ENCODE measurements at regions of chr2 and their contacts with region 1.

Region 1: GRCh38 chr2:60998628-60999545 is 18.6 kb upstream of the PEX13 start:
- DNase-seq: peak; percentile 13
- H3K4me3 ChIP-seq: no peak overlapping the region
- H3K27ac ChIP-seq: no peak overlapping the region
- H3K27me3 ChIP-seq: no peaks in the 10 kb centered on the region
- CTCF ChIP-seq: peak; percentile 67

Region 2: GRCh38 chr2:59440491-59440890 is 1558.4 kb before region 1 on chr2:
- CTCF ChIA-PET with region 1: no interaction called
- POLR2A ChIA-PET with region 1: no interaction called
- DNase-seq: no peak
- H3K4me3 ChIP-seq: no peak overlapping the region
- H3K27ac ChIP-seq: no peak overlapping the region
- H3K27me3 ChIP-seq: no peaks in the 10 kb centered on the region
- CTCF ChIP-seq: no peak

Region 3: DNA sequence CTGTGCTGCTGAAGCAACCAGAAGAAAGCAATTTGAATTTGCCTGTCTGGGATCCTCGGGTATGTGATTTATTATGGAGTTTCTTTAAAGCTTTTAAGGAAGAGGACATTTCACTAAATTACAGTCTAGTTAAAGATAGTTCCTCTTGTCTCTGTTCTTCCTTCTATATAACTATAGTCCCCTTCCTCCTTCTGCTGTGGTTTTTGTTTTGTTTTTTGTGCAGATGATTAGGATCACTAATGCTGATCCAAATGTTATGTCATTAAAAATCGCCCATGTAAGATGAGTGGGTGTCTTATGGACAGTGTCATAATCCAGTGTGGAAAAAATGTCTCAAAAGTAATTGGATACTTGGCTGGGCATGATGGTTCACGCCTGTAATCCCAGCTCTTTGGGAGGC is 218.2 kb before region 1 on chr2:
- CTCF ChIA-PET with region 1: interaction called, 18 read pairs
- POLR2A ChIA-PET with region 1: no interaction called
- DNase-seq: no peak
- H3K4me3 ChIP-seq: no peak overlapping the region
- H3K27ac ChIP-seq: no peak overlapping the region
- H3K27me3 ChIP-seq: no peaks in the 10 kb centered on the region
- CTCF ChIP-seq: no peak

Region 4: GRCh38 chr2:60794277-60794863 is 204.5 kb before region 1 on chr2:
- CTCF ChIA-PET with region 1: interaction called, 59 read pairs
- POLR2A ChIA-PET with region 1: no interaction called
- DNase-seq: no peak
- H3K4me3 ChIP-seq: no peak overlapping the region
- H3K27ac ChIP-seq: no peak overlapping the region
- H3K27me3 ChIP-seq: no peaks in the 10 kb centered on the region
- CTCF ChIP-seq: peak; percentile 67

Region 5: DNA sequence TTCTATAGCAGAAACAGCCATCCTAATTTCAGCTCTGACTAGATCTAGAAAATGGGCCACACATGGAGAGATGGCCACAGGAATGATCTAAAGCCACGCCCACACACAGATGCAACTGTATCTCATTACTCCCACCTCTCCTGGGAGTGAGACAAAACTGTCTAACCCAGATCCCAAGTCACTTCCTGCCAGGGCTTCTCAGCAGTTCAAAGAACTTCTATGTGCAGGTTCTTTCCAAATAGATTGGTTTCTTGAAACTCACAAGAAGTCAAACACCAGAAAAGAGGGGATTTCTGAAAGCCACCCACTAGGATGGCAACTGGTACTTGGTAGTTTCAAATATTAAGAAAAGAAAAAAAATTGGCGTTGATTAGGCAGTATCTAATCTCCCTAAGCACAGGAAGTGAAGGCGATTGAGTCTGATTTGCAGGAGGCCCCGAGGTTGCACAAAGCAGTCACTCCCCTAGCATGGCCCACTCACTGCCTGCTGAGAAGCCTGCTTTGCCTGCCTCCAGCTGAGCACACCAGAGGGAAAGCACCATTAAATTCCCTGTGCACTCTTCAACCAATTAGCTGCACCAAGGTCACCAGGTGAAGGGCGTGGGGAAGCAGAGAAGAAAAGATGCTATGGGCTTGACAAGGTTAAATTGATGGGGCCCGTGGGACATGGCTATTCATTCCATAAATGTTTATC is 191.8 kb before region 1 on chr2:
- CTCF ChIA-PET with region 1: interaction called, 28 read pairs
- POLR2A ChIA-PET with region 1: no interaction called
- DNase-seq: peak; percentile 49
- H3K4me3 ChIP-seq: no peak overlapping the region
- H3K27ac ChIP-seq: no peak overlapping the region
- H3K27me3 ChIP-seq: no peaks in the 10 kb centered on the region
- CTCF ChIP-seq: no peak

Region 6: DNA sequence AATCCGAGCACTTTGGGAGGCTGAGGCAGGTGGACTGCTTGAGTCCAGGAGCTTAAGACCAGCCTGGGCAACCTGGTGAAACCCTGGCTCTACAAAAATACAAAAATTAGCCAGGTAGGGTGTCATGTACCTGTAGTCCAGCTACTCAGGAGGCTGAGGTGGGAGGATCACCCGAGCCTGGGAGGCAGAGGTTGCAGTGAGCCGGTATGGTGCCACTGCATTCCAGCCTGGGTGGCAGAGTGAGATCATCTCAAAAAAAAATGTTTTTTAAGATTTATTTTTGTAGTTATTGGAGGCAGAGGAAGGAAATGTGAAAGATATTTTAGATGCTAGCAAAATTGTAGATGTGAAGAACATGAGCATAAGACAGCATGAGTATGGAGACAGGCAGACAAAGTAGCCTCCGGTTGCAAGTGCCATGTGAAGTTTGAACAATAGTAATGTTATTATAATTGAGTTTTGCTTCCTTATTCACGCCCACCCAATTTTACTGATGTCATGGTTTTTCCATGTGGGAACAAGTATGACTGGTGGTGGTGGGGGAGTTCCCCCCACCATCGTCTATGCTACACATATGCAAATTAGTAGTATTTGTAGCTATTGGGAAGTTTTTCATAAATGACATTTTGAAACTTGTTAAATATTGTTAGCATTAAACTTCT is 99.5 kb before region 1 on chr2:
- CTCF ChIA-PET with region 1: no interaction called
- POLR2A ChIA-PET with region 1: no interaction called
- DNase-seq: no peak
- H3K4me3 ChIP-seq: no peak overlapping the region
- H3K27ac ChIP-seq: no peak overlapping the region
- H3K27me3 ChIP-seq: no peaks in the 10 kb centered on the region
- CTCF ChIP-seq: no peak